ENCODE measurements at regions of chr7 and their contacts with region 1.

Region 1: DNA sequence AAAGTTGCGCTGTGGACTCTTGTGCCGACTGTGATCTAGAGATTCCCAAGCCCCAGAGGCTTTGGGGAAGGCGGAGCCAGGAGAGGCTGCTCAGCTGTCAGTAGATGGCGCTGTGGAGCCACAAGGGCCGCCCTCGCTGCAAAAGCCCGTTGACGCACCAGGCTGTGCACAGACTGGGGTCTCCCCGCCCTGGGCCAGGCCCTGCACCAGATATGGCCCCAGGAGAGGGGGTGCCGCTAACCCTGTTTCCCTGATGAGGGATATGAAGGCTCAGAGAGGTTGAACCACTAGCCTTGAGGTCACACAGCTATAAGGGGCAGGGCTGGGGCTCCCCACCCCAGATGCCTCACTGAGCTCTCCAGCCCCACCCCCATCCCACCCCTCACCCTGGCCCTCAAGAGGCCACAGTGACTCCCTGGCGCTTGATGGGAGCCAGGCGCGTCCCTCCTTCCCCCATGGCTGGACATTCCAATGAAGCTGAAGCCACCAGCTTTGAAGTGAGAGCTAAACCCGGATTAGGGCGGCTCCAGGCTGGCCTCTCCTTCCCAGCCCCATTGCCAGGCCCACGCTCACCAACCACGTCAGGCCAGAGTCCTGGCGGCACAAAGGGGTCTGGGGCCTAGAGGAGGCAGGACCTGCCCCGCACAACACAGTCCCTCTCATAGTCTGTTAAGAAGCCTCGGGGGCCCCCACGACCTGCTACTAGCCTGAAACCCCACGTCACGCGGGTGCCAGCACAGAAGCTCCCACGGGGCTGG is 26.4 kb downstream of the MYL10 start:
- DNase-seq: peak; percentile 51 to 66 (median 63)
- H3K4me3 ChIP-seq: no peak overlapping the region
- H3K4me3 Mint-ChIP-seq: no peak overlapping the region
- H3K27ac ChIP-seq: no peak overlapping the region
- H3K27ac Mint-ChIP-seq: no peak overlapping the region
- H3K4me1 ChIP-seq: no peaks in the 10 kb centered on the region
- H3K4me1 Mint-ChIP-seq: no peaks in the 10 kb centered on the region
- H3K27me3 ChIP-seq: no peaks in the 10 kb centered on the region
- H3K27me3 Mint-ChIP-seq: peaks cover 0 to 4% (median 0%) of the 10 kb centered on the region in 3 donors
- CTCF ChIP-seq: peak; percentile 96

Region 2: GRCh38 chr7:100974018-100974417 is 628.6 kb before region 1 on chr7:
- intact Hi-C with region 1: no loop called
- DNase-seq: no peak
- H3K4me3 ChIP-seq: no peak overlapping the region
- H3K4me3 Mint-ChIP-seq: no peak overlapping the region
- H3K27ac ChIP-seq: no peak overlapping the region
- H3K27ac Mint-ChIP-seq: no peak overlapping the region
- H3K4me1 ChIP-seq: no peaks in the 10 kb centered on the region
- H3K4me1 Mint-ChIP-seq: no peaks in the 10 kb centered on the region
- H3K27me3 ChIP-seq: no peaks in the 10 kb centered on the region
- H3K27me3 Mint-ChIP-seq: peaks cover 13 to 25% (median 15%) of the 10 kb centered on the region in 3 donors
- CTCF ChIP-seq: no peak

Region 3: GRCh38 chr7:101564778-101565211 is 37.9 kb before region 1 on chr7:
- intact Hi-C with region 1: no loop called
- DNase-seq: no peak
- H3K4me3 ChIP-seq: no peak overlapping the region
- H3K4me3 Mint-ChIP-seq: no peak overlapping the region
- H3K27ac ChIP-seq: no peak overlapping the region
- H3K27ac Mint-ChIP-seq: no peak overlapping the region
- H3K4me1 ChIP-seq: no peaks in the 10 kb centered on the region
- H3K4me1 Mint-ChIP-seq: peaks cover 2% of the 10 kb centered on the region
- H3K27me3 ChIP-seq: no peaks in the 10 kb centered on the region
- H3K27me3 Mint-ChIP-seq: peaks cover 0 to 9% (median 6%) of the 10 kb centered on the region in 3 donors
- CTCF ChIP-seq: no peak

Region 4: GRCh38 chr7:102236592-102237287 is 634.1 kb after region 1 on chr7:
- intact Hi-C with region 1: loop called (anchors 2 to 10 kb)
- DNase-seq: peak in 1 of 3 donors; percentile 15
- H3K4me3 ChIP-seq: no peak overlapping the region
- H3K4me3 Mint-ChIP-seq: no peak overlapping the region
- H3K27ac ChIP-seq: no peak overlapping the region
- H3K27ac Mint-ChIP-seq: no peak overlapping the region
- H3K4me1 ChIP-seq: no peaks in the 10 kb centered on the region
- H3K4me1 Mint-ChIP-seq: no peaks in the 10 kb centered on the region
- H3K27me3 ChIP-seq: no peaks in the 10 kb centered on the region
- H3K27me3 Mint-ChIP-seq: peaks cover 0 to 1% (median 0%) of the 10 kb centered on the region in 3 donors
- CTCF ChIP-seq: peak; percentile 65

Region 5: GRCh38 chr7:102272075-102272917 is 669.6 kb after region 1 on chr7:
- intact Hi-C with region 1: loop called (anchors 2 kb)
- DNase-seq: peak; percentile 52 to 65 (median 60)
- H3K4me3 ChIP-seq: no peak overlapping the region
- H3K4me3 Mint-ChIP-seq: no peak overlapping the region
- H3K27ac ChIP-seq: no peak overlapping the region
- H3K27ac Mint-ChIP-seq: no peak overlapping the region
- H3K4me1 ChIP-seq: no peaks in the 10 kb centered on the region
- H3K4me1 Mint-ChIP-seq: peaks cover 2% of the 10 kb centered on the region
- H3K27me3 ChIP-seq: no peaks in the 10 kb centered on the region
- H3K27me3 Mint-ChIP-seq: peaks cover 0 to 4% (median 2%) of the 10 kb centered on the region in 3 donors
- CTCF ChIP-seq: peak; percentile 95

Measured in CD14-positive monocyte (primary cell).